Naive thymus-derived CD4-positive, alpha-beta T cell (primary cell): ENCODE measurements at regions of chr5 and their contacts with region 1.

Region 1: GRCh38 chr5:141691867-141692532 is 10.0 kb upstream of the ARAP3 start:
- DNase-seq: peak; percentile 59 to 91 (median 78)
- ATAC-seq: peak; percentile 94
- H3K4me3 ChIP-seq: peak overlapping the region; percentile 48
- H3K4me3 Mint-ChIP-seq: peak overlapping the region in 9 of 10 donors; percentile 52 to 83 (median 69)
- H3K27ac ChIP-seq: no peak overlapping the region
- H3K27ac Mint-ChIP-seq: peak overlapping the region in 4 of 9 donors; percentile 2 to 60 (median 48)
- H3K4me1 ChIP-seq: peaks cover 12 to 16% of the 10 kb centered on the region in 2 donors
- H3K4me1 Mint-ChIP-seq: peaks cover 13 to 28% (median 16%) of the 10 kb centered on the region in 7 donors
- H3K27me3 ChIP-seq: no peaks in the 10 kb centered on the region
- H3K27me3 Mint-ChIP-seq: peaks cover 0 to 27% (median 11%) of the 10 kb centered on the region in 5 donors

Region 2: GRCh38 chr5:141664732-141665461 is 27.1 kb before region 1 on chr5:
- CTCF ChIA-PET with region 1: interaction called, 15 read pairs
- POLR2A ChIA-PET with region 1: no interaction called
- intact Hi-C with region 1: loop called in 1 of 2 experiments (anchors 1 kb)
- DNase-seq: peak; percentile 36 to 75 (median 61)
- ATAC-seq: peak; percentile 94
- H3K4me3 ChIP-seq: no peak overlapping the region
- H3K4me3 Mint-ChIP-seq: no peak overlapping the region
- H3K27ac ChIP-seq: no peak overlapping the region
- H3K27ac Mint-ChIP-seq: no peak overlapping the region
- H3K4me1 ChIP-seq: no peaks in the 10 kb centered on the region
- H3K4me1 Mint-ChIP-seq: peaks cover 0 to 6% (median 3%) of the 10 kb centered on the region in 7 donors
- H3K27me3 ChIP-seq: no peaks in the 10 kb centered on the region
- H3K27me3 Mint-ChIP-seq: no peaks in the 10 kb centered on the region

Region 3: DNA sequence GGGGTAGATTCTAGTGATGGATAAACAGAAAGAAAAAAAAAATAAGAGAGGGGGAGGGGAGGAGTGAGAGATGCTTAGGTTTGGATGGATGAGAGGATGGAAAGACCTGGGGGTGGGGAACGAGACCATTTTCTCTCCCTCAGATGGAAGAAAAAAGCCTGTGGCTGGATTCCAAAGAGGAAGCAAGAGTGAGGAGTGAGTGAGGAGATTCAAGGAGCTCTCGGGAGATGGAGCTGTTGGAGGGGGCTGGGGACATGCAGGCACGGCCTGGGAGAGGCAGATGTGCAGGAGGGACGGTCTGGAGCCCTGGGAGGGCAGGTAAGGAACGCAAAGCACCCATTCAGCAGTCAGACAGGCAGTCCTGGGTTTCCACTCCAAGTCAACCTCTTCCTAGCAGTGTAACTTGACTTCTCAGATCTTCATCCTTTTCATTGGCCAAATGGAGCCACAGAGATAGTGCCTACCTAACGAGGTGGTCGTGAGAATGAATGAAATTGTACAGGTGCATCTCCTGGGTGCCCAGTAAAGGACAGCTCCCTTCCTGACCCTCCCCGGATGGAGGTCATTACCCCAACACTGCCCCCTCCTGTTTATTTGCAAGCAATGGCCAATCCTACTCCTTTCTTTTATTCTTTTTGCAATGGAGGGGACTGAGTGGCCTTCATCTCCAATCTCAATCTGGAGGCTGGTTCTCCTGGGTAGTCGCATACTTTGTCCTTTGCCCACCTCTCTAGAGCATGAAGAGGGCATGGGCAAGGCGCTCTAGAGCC is 134.0 kb after region 1 on chr5:
- CTCF ChIA-PET with region 1: interaction called, 4 read pairs
- POLR2A ChIA-PET with region 1: no interaction called
- intact Hi-C with region 1: loop called (anchors 1 to 2 kb)
- DNase-seq: no peak
- ATAC-seq: peak; percentile 48
- H3K4me3 ChIP-seq: no peak overlapping the region
- H3K4me3 Mint-ChIP-seq: no peak overlapping the region
- H3K27ac ChIP-seq: no peak overlapping the region
- H3K27ac Mint-ChIP-seq: peak overlapping the region in 1 of 9 donors; percentile 57
- H3K4me1 ChIP-seq: no peaks in the 10 kb centered on the region
- H3K4me1 Mint-ChIP-seq: peaks cover 0 to 8% (median 0%) of the 10 kb centered on the region in 7 donors
- H3K27me3 ChIP-seq: no peaks in the 10 kb centered on the region
- H3K27me3 Mint-ChIP-seq: peaks cover 0 to 34% (median 14%) of the 10 kb centered on the region in 5 donors

Region 4: DNA sequence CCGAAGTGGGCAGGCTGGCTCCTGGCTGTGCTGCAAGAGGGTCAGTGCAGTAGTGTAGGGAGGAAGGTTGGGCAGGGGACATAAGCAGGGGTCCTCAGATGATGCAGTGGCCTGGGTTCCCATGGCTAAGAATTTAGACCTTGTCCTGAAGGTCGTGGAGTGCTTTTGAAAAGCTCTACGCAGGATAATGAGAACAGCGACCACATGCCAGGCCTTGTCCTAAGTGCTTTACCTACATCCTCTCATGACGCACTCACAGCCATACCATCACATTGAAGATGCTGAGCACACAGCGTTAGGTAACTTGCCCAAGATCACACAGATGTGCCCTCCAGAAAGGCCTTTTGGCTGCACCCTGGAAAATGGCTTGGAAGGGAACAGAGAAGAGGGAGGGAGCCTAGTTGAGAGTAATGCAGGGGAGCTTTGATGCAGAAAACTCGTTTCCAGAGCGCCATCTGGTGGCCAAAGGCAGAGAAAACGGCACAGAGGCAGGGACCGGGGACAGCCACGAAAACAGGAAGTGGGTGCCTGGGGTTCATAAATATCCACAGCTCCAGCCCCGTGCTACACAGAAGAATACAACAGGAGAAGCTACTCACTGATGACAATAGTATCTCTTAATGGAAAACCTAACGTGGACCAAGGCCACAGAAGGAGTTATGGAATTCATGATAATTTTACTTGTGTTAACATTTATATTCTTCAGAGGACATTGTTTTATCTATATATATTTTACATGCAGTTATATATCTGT is 268.6 kb after region 1 on chr5:
- CTCF ChIA-PET with region 1: interaction called, 143 read pairs
- POLR2A ChIA-PET with region 1: interaction called, 25 read pairs
- intact Hi-C with region 1: loop called (anchors 1 kb)
- DNase-seq: peak; percentile 82 to 95 (median 89)
- ATAC-seq: peak; percentile 94
- H3K4me3 ChIP-seq: peak overlapping the region; percentile 7
- H3K4me3 Mint-ChIP-seq: peak overlapping the region; percentile 5 to 75 (median 54)
- H3K27ac ChIP-seq: peak overlapping the region; percentile 50
- H3K27ac Mint-ChIP-seq: peak overlapping the region; percentile 82 to 93 (median 92)
- H3K4me1 ChIP-seq: peaks cover 30 to 43% of the 10 kb centered on the region in 2 donors
- H3K4me1 Mint-ChIP-seq: peaks cover 29 to 51% (median 40%) of the 10 kb centered on the region in 7 donors
- H3K27me3 ChIP-seq: no peaks in the 10 kb centered on the region
- H3K27me3 Mint-ChIP-seq: no peaks in the 10 kb centered on the region

Region 5: GRCh38 chr5:141992349-141992963 is 300.5 kb after region 1 on chr5:
- CTCF ChIA-PET with region 1: interaction called, 4 read pairs
- POLR2A ChIA-PET with region 1: interaction called, 3 read pairs
- intact Hi-C with region 1: loop called in 1 of 2 experiments (anchors 1 kb)
- DNase-seq: peak; percentile 49 to 77 (median 69)
- ATAC-seq: peak; percentile 88
- H3K4me3 ChIP-seq: no peak overlapping the region
- H3K4me3 Mint-ChIP-seq: no peak overlapping the region
- H3K27ac ChIP-seq: no peak overlapping the region
- H3K27ac Mint-ChIP-seq: peak overlapping the region in 2 of 9 donors; percentile 52 to 71
- H3K4me1 ChIP-seq: no peaks in the 10 kb centered on the region
- H3K4me1 Mint-ChIP-seq: peaks cover 4 to 18% (median 7%) of the 10 kb centered on the region in 7 donors
- H3K27me3 ChIP-seq: no peaks in the 10 kb centered on the region
- H3K27me3 Mint-ChIP-seq: no peaks in the 10 kb centered on the region

Region 6: GRCh38 chr5:142133330-142134206 is 441.6 kb after region 1 on chr5:
- CTCF ChIA-PET with region 1: no interaction called
- POLR2A ChIA-PET with region 1: no interaction called
- intact Hi-C with region 1: no loop called
- DNase-seq: no peak
- ATAC-seq: no peak
- H3K4me3 ChIP-seq: no peak overlapping the region
- H3K4me3 Mint-ChIP-seq: no peak overlapping the region
- H3K27ac ChIP-seq: no peak overlapping the region
- H3K27ac Mint-ChIP-seq: no peak overlapping the region
- H3K4me1 ChIP-seq: peaks cover 12 to 49% of the 10 kb centered on the region in 2 donors
- H3K4me1 Mint-ChIP-seq: peaks cover 12 to 59% (median 44%) of the 10 kb centered on the region in 7 donors
- H3K27me3 ChIP-seq: no peaks in the 10 kb centered on the region
- H3K27me3 Mint-ChIP-seq: no peaks in the 10 kb centered on the region

Region 7: GRCh38 chr5:142145106-142145900 is 453.3 kb after region 1 on chr5:
- CTCF ChIA-PET with region 1: interaction called, 13 read pairs
- POLR2A ChIA-PET with region 1: no interaction called
- intact Hi-C with region 1: loop called (anchors 1 to 2 kb)
- DNase-seq: peak in 8 of 9 donors; percentile 38 to 67 (median 58)
- ATAC-seq: peak; percentile 89
- H3K4me3 ChIP-seq: no peak overlapping the region
- H3K4me3 Mint-ChIP-seq: no peak overlapping the region
- H3K27ac ChIP-seq: no peak overlapping the region
- H3K27ac Mint-ChIP-seq: no peak overlapping the region
- H3K4me1 ChIP-seq: no peaks in the 10 kb centered on the region
- H3K4me1 Mint-ChIP-seq: peaks cover 0 to 17% (median 5%) of the 10 kb centered on the region in 7 donors
- H3K27me3 ChIP-seq: no peaks in the 10 kb centered on the region
- H3K27me3 Mint-ChIP-seq: no peaks in the 10 kb centered on the region